HepG2 (cell line): ENCODE measurements at regions of chr4 and their contacts with region 1.

Region 1: DNA sequence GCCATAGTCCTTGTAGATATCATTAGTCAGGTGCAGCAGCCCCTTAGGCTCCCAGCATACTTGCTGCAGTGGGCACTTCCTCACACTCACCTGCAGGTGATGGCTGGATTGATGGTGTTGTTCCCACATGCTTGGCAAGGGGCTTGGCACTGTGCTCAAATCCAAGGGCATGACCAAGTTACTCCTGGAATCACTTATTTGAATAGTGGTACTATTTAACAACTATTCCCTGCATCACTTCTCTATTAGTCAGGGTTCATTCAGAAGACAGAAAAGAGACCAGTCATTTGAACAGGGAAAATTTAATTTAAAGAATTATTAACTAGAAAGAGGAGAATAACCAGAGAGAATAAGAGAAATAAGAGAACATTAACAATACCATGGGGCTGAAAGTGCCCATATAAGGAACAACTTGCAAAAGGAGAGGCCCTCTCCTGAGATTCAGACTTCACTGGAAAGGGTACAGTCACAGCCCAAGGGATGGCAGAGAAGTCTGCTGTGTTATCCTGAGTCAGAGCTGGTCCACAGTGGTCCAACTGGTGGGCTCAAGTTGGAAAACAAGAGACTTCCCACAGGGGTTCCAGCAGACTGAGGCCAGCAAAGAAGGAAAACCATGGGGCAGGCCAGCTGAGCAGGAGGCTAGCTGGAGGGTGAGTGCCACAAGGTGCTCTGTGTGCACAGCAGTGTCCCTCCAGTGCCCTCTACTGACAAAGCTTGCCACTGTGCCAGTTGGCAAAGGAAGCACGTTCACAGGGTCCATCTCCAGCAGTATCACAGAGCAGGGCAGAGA is 9.8 kb downstream of the SPP1 start:
- DNase-seq: peak; percentile 70
- ATAC-seq: peak; percentile 100
- H3K4me3 ChIP-seq: no peak overlapping the region
- H3K27ac ChIP-seq: no peak overlapping the region
- H3K4me1 ChIP-seq: peaks cover 8% of the 10 kb centered on the region
- H3K27me3 ChIP-seq: peaks cover 0 to 5% of the 10 kb centered on the region in 2 experiments; a peak in 2 of 5 replicates
- CTCF ChIP-seq: peak; percentile 99
- EP300 ChIP-seq: no peak
- POLR2A ChIP-seq: no peak
- RAD21 ChIP-seq: peak; percentile 78

Region 2: DNA sequence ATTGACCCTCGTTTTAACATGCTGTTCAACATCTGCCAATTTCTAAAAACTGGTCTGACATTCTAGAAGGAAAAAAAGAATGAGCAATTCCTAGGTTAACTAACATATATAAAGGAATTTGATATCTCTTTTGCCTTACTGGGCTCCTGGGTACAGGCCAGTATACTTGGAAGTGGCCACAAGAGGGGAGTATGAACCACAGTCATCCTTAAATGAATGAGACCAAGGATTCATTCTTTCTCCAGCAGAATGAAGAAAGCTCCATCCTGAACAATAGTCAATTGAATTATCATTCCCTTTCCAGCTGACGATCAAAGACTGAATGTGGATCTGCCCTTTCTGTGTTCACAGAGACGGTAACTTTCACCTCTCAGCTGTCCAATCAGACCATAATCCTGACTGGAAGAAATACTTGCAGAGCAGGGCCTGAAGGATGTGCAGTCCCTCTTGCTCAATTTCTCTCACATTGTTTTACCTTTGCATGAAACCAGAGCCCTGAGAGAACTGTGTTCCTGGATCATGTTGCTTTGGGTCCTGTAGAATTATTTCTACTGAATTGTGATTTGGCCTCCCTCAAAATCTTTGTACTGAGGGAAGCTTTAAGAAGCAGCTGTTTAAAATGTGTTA is 441.3 kb before region 1 on chr4:
- CTCF ChIA-PET with region 1: no interaction called
- POLR2A ChIA-PET with region 1: no interaction called
- in situ Hi-C with region 1: loop called (anchors 25 kb)
- intact Hi-C with region 1: no loop called
- DNase-seq: peak; percentile 4
- ATAC-seq: peak; percentile 93
- H3K4me3 ChIP-seq: no peak overlapping the region
- H3K27ac ChIP-seq: no peak overlapping the region
- H3K4me1 ChIP-seq: no peaks in the 10 kb centered on the region
- H3K27me3 ChIP-seq: peaks cover 0 to 5% of the 10 kb centered on the region in 2 experiments; a peak in 2 of 5 replicates
- CTCF ChIP-seq: peak; percentile 35
- EP300 ChIP-seq: no peak
- POLR2A ChIP-seq: no peak
- RAD21 ChIP-seq: no peak

Region 3: DNA sequence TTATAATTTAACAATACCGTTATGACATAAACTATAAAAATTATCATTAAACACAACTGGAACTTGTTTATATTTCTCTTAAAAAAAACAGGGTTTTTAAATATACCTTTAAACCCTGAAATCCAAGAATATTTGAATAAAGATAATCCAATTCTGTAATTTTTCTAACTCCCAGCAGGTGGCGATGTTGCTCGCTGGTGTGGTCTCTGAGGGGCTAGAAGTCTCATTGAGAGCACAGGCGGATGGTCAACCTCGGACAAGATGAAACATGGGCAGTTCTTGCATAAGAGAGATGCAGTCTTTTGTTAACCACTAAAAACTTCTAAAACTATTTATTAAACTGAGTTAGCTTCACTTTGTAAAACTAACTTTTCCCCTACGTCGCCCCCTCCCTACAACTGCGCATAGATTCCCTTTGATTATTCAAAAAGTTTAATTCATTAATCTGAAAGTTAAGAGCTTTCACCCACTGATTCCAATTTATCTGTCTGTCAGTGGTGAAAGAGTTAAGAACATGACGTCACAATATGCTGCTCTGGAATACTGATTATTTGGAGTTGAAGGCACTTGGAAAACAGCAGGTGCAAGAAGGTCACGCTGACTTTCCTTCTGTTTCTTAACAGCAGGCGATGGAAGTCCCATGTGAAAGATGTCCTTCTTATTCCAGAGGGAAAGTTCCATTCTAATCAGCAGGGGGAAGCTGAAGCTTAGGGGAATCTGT is 305.7 kb before region 1 on chr4:
- CTCF ChIA-PET with region 1: no interaction called
- POLR2A ChIA-PET with region 1: no interaction called
- in situ Hi-C with region 1: loop called (anchors 25 kb)
- intact Hi-C with region 1: loop called (anchors 5 kb)
- DNase-seq: peak; percentile 48
- ATAC-seq: peak; percentile 63
- H3K4me3 ChIP-seq: no peak overlapping the region
- H3K27ac ChIP-seq: no peak overlapping the region
- H3K4me1 ChIP-seq: no peaks in the 10 kb centered on the region
- H3K27me3 ChIP-seq: peaks cover 0 to 7% of the 10 kb centered on the region in 2 experiments; a peak in 2 of 5 replicates
- CTCF ChIP-seq: peak; percentile 78
- EP300 ChIP-seq: no peak
- POLR2A ChIP-seq: no peak
- RAD21 ChIP-seq: peak; percentile 48; the same call in 1 of the 2 replicates

Region 4: GRCh38 chr4:87895964-87896621 is 89.2 kb before region 1 on chr4:
- CTCF ChIA-PET with region 1: no interaction called
- POLR2A ChIA-PET with region 1: no interaction called
- in situ Hi-C with region 1: no loop called
- intact Hi-C with region 1: no loop called
- DNase-seq: peak; percentile 52
- ATAC-seq: no peak
- H3K4me3 ChIP-seq: no peak overlapping the region
- H3K27ac ChIP-seq: no peak overlapping the region
- H3K4me1 ChIP-seq: peaks cover 14% of the 10 kb centered on the region; the same call in 1 of the 2 replicates
- H3K27me3 ChIP-seq: no peaks in the 10 kb centered on the region
- CTCF ChIP-seq: no peak
- EP300 ChIP-seq: 0 out of 4 replicates have a peak, but pooled peaks of 1 of the 2 experiments have one; percentile 28
- POLR2A ChIP-seq: no peak
- RAD21 ChIP-seq: no peak